Activated T-helper 1 cell treated with anti-CD3 and anti-CD28 coated beads, Interleukin-12 subunit alpha, Interleukin-12 subunit beta, Interleukin-2, Interleukin-4 antibody, amounts not matched to agents 30 ng/mL and 10 ng/mL and 1 ng/mL, durations not matched to agents 14 hours and 24 hours and 36 hours (primary cell): ENCODE measurements at regions of chr2 and their contacts with region 1.

Region 1: GRCh38 chr2:174341286-174341994 is 6.7 kb downstream of the SP9 start:
- DNase-seq: peak; percentile 83
- H3K4me3 Mint-ChIP-seq: peak overlapping the region; percentile 70
- H3K27ac Mint-ChIP-seq: peak overlapping the region; percentile 89
- H3K4me1 Mint-ChIP-seq: peaks cover 33% of the 10 kb centered on the region
- H3K27me3 Mint-ChIP-seq: peaks cover 62% of the 10 kb centered on the region

Region 2: DNA sequence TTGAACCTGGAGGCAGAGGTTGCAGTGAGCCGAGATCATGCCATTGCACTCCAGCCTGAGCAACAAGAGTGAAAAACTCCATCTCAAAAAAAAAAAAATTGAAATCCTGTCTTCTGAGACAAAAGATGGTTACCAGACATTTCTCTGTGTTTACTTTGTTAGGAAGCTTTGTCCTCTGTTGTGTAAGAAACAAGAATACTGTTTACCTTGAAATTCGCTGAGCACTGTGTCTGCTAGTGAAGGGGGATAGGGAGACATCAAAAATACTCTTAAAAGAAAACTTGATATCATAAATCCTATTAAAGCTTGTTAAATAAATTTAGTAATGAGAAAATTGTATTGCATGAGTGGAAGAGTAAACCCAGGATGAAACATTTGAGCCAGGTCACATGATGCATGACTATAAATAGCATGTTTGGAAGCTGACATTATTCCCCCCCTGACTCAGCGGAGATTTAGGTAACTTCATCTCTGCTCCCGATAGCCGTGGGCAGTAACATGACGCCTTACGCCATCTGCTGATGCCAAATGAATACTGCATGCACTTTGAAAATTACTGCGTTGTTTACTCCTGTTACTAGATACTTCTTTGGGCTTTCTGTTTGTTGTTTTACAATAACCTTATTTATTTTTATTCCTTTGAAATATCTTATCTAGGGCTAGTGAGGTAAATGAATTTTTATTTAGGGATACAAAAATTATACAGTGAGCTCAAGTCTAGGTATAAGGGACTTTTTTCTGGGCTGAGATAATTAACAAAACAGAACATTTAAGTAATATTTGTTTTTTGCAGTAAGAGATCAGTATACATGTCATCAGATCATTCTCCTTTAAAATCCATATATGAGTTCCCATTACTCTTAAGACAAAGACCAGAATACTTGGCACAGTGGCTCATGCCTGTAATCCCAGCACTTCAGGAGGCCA is 1130.9 kb before region 1 on chr2:
- intact Hi-C with region 1: loop called (anchors 10 kb)
- DNase-seq: peak; percentile 41
- H3K4me3 Mint-ChIP-seq: no peak overlapping the region
- H3K27ac Mint-ChIP-seq: no peak overlapping the region
- H3K4me1 Mint-ChIP-seq: peaks cover 6% of the 10 kb centered on the region
- H3K27me3 Mint-ChIP-seq: no peaks in the 10 kb centered on the region

Region 3: GRCh38 chr2:173571021-173571882 is 770.2 kb before region 1 on chr2:
- intact Hi-C with region 1: loop called (anchors 5 kb)
- DNase-seq: no peak
- H3K4me3 Mint-ChIP-seq: no peak overlapping the region
- H3K27ac Mint-ChIP-seq: no peak overlapping the region
- H3K4me1 Mint-ChIP-seq: peaks cover 5% of the 10 kb centered on the region
- H3K27me3 Mint-ChIP-seq: peaks cover 18% of the 10 kb centered on the region

Region 4: GRCh38 chr2:173914055-173914934 is 427.1 kb before region 1 on chr2:
- intact Hi-C with region 1: loop called (anchors 10 kb)
- DNase-seq: no peak
- H3K4me3 Mint-ChIP-seq: no peak overlapping the region
- H3K27ac Mint-ChIP-seq: no peak overlapping the region
- H3K4me1 Mint-ChIP-seq: peaks cover 38% of the 10 kb centered on the region
- H3K27me3 Mint-ChIP-seq: no peaks in the 10 kb centered on the region

Region 5: DNA sequence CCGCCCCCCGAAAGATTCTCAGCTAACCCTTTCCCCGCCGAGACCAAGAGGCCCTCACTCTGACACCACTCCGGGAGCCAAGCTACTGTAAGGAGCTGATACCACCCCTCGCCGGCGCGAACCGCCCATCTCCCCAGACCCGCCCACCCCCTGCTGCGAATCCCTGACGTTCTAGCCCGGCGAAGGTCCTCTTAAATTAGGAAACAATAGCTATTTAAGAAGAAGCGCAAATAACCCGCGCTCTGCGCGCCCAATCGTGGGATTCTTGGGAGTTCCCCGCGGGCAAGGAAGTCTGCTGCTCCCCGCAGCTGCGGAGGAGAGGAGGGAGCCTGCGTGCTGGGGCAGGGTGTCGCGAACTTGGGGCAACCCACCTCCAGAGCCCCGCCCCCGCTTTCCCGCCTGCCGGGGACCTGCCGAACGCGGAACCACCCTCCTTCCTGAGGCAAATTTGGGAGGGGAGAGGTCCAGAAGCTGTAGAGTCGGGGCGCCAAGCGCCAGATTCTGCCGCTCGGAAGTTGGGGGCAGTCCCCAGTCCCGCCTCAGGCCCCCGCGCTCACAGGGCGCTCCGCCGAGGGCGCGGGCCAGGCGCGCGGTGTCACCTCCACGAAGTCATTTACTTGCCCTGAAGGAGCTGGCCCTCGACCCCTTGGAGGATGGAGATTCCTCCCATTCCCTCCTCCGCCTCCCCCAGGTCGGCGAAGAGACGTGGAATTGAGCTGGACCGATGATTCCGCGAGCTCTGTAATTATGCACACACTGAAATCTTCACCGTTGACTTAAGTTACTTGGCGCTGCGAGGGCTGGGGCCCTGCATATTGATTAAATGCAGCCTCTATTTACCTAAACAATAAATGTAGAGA is 15.0 kb before region 1 on chr2:
- intact Hi-C with region 1: loop called (anchors 1 kb)
- DNase-seq: no peak
- H3K4me3 Mint-ChIP-seq: peak overlapping the region; percentile 77
- H3K27ac Mint-ChIP-seq: peak overlapping the region; percentile 35
- H3K4me1 Mint-ChIP-seq: peaks cover 15% of the 10 kb centered on the region
- H3K27me3 Mint-ChIP-seq: peaks cover 88% of the 10 kb centered on the region

Region 6: DNA sequence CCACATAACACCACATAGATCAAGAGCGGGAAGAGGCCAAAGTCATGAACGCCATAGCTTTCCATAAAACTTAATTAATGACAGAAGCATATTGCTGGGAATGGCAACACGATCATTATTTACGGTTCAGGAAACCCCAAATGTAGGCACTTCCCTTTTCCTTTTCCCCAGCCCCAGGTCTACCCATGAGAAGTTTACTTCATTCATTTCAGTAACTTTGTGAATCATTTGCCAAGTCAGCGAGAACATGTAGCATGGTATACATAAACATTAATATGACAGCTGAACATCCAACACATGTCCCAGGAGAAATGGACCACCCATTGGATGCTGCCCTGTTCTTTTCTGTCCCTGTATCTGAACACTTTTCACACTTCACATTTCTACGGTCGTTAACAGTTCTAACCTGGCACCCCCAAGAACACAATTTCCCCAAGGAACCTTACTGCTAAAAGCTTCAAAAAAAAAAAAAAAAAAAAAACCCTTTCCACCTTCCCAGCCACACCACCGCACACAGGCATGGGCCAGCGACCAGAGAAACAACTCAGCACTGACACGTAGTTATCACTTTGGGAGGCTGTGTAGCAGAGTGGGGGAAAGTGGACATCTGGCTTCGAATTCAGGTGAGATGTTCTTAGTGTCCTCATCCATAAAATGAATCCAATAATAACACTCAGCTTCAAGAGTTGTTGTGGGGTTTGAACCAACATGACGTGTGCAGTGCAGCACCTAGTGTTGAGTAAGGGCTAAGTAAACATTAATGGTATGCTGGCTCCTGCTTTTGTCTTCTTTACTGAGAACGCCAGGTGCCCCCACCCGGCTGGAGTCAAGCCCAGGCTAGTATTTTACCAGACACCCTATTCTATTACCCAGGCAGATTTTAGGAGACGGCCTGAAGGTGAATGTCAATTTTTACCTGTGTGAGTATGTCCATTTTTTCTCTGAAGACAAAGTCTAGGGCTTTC is 1289.1 kb after region 1 on chr2:
- intact Hi-C with region 1: no loop called
- DNase-seq: no peak
- H3K4me3 Mint-ChIP-seq: no peak overlapping the region
- H3K27ac Mint-ChIP-seq: no peak overlapping the region
- H3K4me1 Mint-ChIP-seq: no peaks in the 10 kb centered on the region
- H3K27me3 Mint-ChIP-seq: no peaks in the 10 kb centered on the region